CD14-positive monocyte (primary cell): ENCODE measurements at regions of chr19 and their contacts with region 1.

Region 1: DNA sequence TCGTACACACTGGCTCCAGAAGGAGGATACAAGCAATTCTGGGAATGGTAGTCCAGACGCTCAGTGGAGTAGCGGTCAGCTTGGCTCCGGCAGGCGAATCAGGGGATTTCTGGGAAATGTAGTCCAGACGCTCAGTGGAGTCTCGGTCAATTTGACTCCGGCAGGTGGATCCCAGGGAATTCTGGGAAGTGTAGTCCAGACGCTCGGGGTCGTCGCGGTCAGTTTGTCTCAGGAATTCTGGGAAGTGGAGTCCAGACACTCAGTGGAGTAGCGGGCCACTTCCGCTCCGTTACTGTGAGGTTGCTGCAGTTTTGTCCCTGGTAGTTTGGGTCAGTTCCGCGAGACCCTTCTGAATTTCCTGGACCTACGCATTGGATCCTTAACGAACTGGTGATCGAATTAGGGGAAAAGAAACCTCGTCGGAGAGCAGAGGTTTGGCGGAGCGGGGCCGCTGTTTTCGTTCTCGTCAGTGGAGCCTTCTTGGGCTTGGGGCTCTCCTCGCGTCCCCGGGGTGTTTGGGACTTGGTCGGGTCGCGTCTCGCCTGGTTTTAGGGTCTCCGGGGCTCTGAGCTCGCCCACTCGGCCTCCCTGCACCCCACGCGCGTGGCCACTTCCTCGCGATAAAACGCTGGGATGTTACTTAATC is at the start of gene ZNF225:
- DNase-seq: peak; percentile 92 to 96 (median 94)
- H3K4me3 ChIP-seq: peak within 1 kb of the TSS; percentile 92 to 94 (median 94)
- H3K4me3 Mint-ChIP-seq: peak within 1 kb of the TSS; percentile 98 to 100
- H3K27ac ChIP-seq: peak within 1 kb of the TSS; percentile 47 to 76
- H3K27ac Mint-ChIP-seq: peak within 1 kb of the TSS; percentile 87 to 95 (median 91)
- H3K4me1 ChIP-seq: peaks cover 17 to 27% of the 10 kb centered on the region in 2 donors
- H3K4me1 Mint-ChIP-seq: peaks cover 23% of the 10 kb centered on the region
- H3K27me3 ChIP-seq: no peaks in the 10 kb centered on the region
- H3K27me3 Mint-ChIP-seq: peaks cover 0 to 2% (median 0%) of the 10 kb centered on the region in 3 donors
- CTCF ChIP-seq: no peak
- polyA plus RNA-seq, gene ZNF225: 0.86 to 1.1 (median 0.93) TPM

Region 2: GRCh38 chr19:44002566-44003460 is 110.4 kb before region 1 on chr19 and contains the start of gene ZNF230:
- intact Hi-C with region 1: loop called in 1 of 2 experiments (anchors 5 kb)
- DNase-seq: peak; percentile 92 to 97 (median 95)
- H3K4me3 ChIP-seq: peak within 1 kb of the TSS; percentile 82 to 98 (median 92)
- H3K4me3 Mint-ChIP-seq: peak within 1 kb of the TSS; percentile 96 to 99
- H3K27ac ChIP-seq: peak within 1 kb of the TSS; percentile 83 to 86
- H3K27ac Mint-ChIP-seq: peak within 1 kb of the TSS; percentile 93 to 99 (median 96)
- H3K4me1 ChIP-seq: peaks cover 31 to 34% of the 10 kb centered on the region in 2 donors
- H3K4me1 Mint-ChIP-seq: peaks cover 31% of the 10 kb centered on the region
- H3K27me3 ChIP-seq: no peaks in the 10 kb centered on the region
- H3K27me3 Mint-ChIP-seq: peaks cover 0 to 4% (median 2%) of the 10 kb centered on the region in 3 donors
- CTCF ChIP-seq: no peak
- polyA plus RNA-seq, gene ZNF230: 1.0 to 3.9 (median 1.3) TPM

Region 3: GRCh38 chr19:44141191-44142058 is 28.2 kb after region 1 on chr19 and contains the start of gene ZNF234:
- intact Hi-C with region 1: loop called in 1 of 2 experiments (anchors 2 kb)
- DNase-seq: peak; percentile 41 to 69 (median 63)
- H3K4me3 ChIP-seq: peak within 1 kb of the TSS; percentile 71 to 97 (median 81)
- H3K4me3 Mint-ChIP-seq: peak within 1 kb of the TSS; percentile 98 to 99
- H3K27ac ChIP-seq: peak within 1 kb of the TSS in 1 of 2 donors; percentile 67
- H3K27ac Mint-ChIP-seq: peak within 1 kb of the TSS; percentile 63 to 93 (median 90)
- H3K4me1 ChIP-seq: peaks cover 13 to 17% of the 10 kb centered on the region in 2 donors
- H3K4me1 Mint-ChIP-seq: peaks cover 17% of the 10 kb centered on the region
- H3K27me3 ChIP-seq: no peaks in the 10 kb centered on the region
- H3K27me3 Mint-ChIP-seq: peaks cover 0 to 4% (median 2%) of the 10 kb centered on the region in 3 donors
- CTCF ChIP-seq: no peak
- polyA plus RNA-seq, gene ZNF234: 0.73 to 2.3 (median 2.2) TPM

Region 4: GRCh38 chr19:44192127-44192526 is 78.9 kb after region 1 on chr19:
- intact Hi-C with region 1: no loop called
- DNase-seq: no peak
- H3K4me3 ChIP-seq: no peak overlapping the region
- H3K4me3 Mint-ChIP-seq: no peak overlapping the region
- H3K27ac ChIP-seq: no peak overlapping the region
- H3K27ac Mint-ChIP-seq: no peak overlapping the region
- H3K4me1 ChIP-seq: no peaks in the 10 kb centered on the region
- H3K4me1 Mint-ChIP-seq: no peaks in the 10 kb centered on the region
- H3K27me3 ChIP-seq: no peaks in the 10 kb centered on the region
- H3K27me3 Mint-ChIP-seq: peaks cover 0 to 4% (median 1%) of the 10 kb centered on the region in 3 donors
- CTCF ChIP-seq: no peak

Region 5: DNA sequence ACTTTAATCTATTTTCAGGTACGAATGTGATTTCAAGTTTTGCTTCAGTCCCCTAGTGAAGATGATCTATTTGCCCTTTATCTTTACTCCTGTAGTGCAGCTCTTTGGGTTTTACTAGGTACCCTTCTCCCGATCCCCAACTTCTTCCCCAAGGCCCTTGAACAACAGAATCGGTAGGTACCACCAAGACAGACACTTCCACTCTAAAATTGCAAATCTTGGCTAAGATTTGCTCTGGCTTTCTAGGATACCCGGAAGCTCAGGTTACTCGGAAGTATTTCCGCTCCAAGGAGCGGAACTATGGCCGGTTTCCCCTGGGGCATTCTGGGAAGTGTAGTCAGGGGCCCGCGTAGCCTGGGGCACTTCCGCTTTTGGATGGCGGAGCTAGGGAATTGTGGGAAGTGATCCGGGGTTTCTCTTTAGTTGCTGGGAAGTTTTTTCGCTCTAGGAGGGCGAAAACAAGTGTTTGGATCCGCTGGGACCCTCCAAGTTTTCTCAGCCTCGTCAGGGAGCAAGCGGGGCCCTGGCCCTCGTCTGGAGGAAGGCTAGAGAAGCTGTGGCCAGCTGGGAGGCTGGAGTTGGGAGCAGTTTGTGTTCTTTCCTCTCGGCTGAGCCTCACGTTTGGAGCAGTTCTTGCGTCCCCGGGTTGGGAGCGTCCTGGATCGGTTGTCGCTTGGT is 94.0 kb after region 1 on chr19:
- intact Hi-C with region 1: loop called (anchors 5 to 10 kb)
- DNase-seq: peak; percentile 82 to 91 (median 88)
- H3K4me3 ChIP-seq: peak overlapping the region; percentile 77 to 97 (median 96)
- H3K4me3 Mint-ChIP-seq: peak overlapping the region; percentile 92 to 98
- H3K27ac ChIP-seq: peak overlapping the region; percentile 49 to 79
- H3K27ac Mint-ChIP-seq: peak overlapping the region; percentile 72 to 95 (median 89)
- H3K4me1 ChIP-seq: peaks cover 8 to 10% of the 10 kb centered on the region in 2 donors
- H3K4me1 Mint-ChIP-seq: peaks cover 10% of the 10 kb centered on the region
- H3K27me3 ChIP-seq: peaks cover 0 to 7% of the 10 kb centered on the region in 2 donors
- H3K27me3 Mint-ChIP-seq: peaks cover 2 to 12% (median 9%) of the 10 kb centered on the region in 3 donors
- CTCF ChIP-seq: no peak